ENCODE measurements at regions of chr3 and their contacts with region 1.

Region 1: GRCh38 chr3:9468460-9468859 is 71.0 kb downstream of the SETD5 start:
- DNase-seq: peak; percentile 37
- ATAC-seq: peak; percentile 46; the same call in 1 of the 2 replicates
- H3K4me3 ChIP-seq: no peak overlapping the region
- H3K27ac ChIP-seq: no peak overlapping the region
- H3K4me1 ChIP-seq: no peaks in the 10 kb centered on the region
- H3K27me3 ChIP-seq: no peaks in the 10 kb centered on the region
- CTCF ChIP-seq: no peak
- POLR2A ChIP-seq: no peak
- RAD21 ChIP-seq: no peak

Region 2: GRCh38 chr3:9430733-9431132 is 37.7 kb before region 1 on chr3:
- CTCF ChIA-PET with region 1: no interaction called
- POLR2A ChIA-PET with region 1: no interaction called
- dilution Hi-C with region 1: no loop called
- in situ Hi-C with region 1: loop called (anchors 5 kb)
- intact Hi-C with region 1: loop called (anchors 5 kb)
- DNase-seq: no peak
- ATAC-seq: no peak
- H3K4me3 ChIP-seq: no peak overlapping the region
- H3K27ac ChIP-seq: no peak overlapping the region
- H3K4me1 ChIP-seq: peaks cover 2% of the 10 kb centered on the region
- H3K27me3 ChIP-seq: no peaks in the 10 kb centered on the region
- CTCF ChIP-seq: no peak
- POLR2A ChIP-seq: no peak
- RAD21 ChIP-seq: no peak

Measured in IMR-90 (cell line).